BJ (cell line): ENCODE measurements at regions of chr14 and their contacts with region 1.

Region 1: GRCh38 chr14:35855876-35856481 is 29.8 kb downstream of the BRMS1L start:
- DNase-seq: no peak
- H3K4me3 ChIP-seq: no peak overlapping the region
- H3K27me3 ChIP-seq: no peaks in the 10 kb centered on the region
- CTCF ChIP-seq: no peak

Region 2: GRCh38 chr14:35844494-35844893 is 11.5 kb before region 1 on chr14:
- CTCF ChIA-PET with region 1: no interaction called
- POLR2A ChIA-PET with region 1: interaction called, 12 read pairs
- DNase-seq: no peak
- H3K4me3 ChIP-seq: no peak overlapping the region
- H3K27me3 ChIP-seq: no peaks in the 10 kb centered on the region
- CTCF ChIP-seq: no peak